ENCODE measurements at regions of chr15 and their contacts with region 1.

Region 1: DNA sequence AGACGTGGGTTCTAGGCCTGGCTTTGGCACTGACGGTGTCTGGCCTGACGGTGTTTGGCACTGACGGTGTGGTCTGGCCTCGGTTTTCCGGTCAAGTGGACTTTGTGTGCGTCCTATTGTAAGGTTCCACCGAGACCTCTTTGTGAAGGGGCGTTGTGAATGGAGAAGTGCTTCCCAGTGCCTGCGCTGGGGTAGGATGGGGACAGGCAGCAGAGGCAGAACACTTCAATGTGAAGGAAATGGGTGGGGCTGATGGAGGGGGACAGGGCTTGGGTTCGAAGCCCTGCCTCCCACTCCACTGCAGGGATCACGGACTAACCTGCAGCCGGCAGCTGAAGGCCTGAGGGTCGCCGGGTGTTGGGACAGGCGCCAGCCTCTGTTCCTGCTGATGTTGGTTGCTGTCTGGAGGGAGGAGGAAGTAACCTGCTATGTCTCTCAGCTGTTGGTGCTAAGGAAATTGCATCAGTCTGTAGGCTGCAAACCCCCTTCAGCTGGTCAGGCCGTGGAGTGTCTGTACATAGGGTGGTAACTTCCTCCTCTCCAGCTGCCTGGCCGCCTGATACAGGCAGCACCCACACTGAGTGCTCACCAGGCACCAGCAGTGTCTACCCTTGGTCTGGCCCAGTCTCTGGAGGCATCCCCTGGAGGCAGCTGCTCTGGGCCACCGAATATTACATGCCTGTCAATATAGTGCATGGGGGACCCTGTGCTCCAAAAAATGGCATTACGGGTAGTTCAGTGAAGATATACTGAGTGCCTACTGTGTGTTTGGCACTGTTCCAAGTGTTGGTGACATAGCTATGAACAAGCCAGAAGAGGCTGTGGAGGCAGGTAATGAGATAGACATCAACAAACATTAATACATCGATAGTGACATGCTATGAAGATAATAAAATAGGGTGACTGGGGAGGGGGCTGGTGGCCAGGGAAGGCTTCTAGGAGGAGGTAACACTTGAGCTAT is 1.1 kb downstream of the TM6SF1 start:
- DNase-seq: peak; percentile 46 to 57
- ATAC-seq: peak; percentile 26 to 30
- H3K4me3 ChIP-seq: peak overlapping the region; percentile 64 to 88 (median 76)
- H3K27ac ChIP-seq: peak overlapping the region; percentile 80 to 91 (median 88)
- H3K4me1 ChIP-seq: peaks cover 34 to 35% of the 10 kb centered on the region in 2 donors
- H3K27me3 ChIP-seq: no peaks in the 10 kb centered on the region
- CTCF ChIP-seq: no peak
- POLR2A ChIP-seq: peak in 1 of 2 donors; percentile 33

Region 2: GRCh38 chr15:82540055-82540983 is 568.2 kb before region 1 on chr15 and contains the start of gene RPS17:
- in situ Hi-C with region 1: loop called in 1 of 4 experiments (anchors 25 kb)
- intact Hi-C with region 1: no loop called
- DNase-seq: peak; percentile 89 to 94
- ATAC-seq: peak; percentile 91 to 95
- H3K4me3 ChIP-seq: peak within 1 kb of the TSS; percentile 82 to 88 (median 85)
- H3K27ac ChIP-seq: peak within 1 kb of the TSS; percentile 80 to 91 (median 83)
- H3K4me1 ChIP-seq: peaks cover 8 to 11% of the 10 kb centered on the region in 2 donors
- H3K27me3 ChIP-seq: no peaks in the 10 kb centered on the region
- CTCF ChIP-seq: peak; percentile 99 to 100 (median 99)
- POLR2A ChIP-seq: peak; percentile 85 to 91
- total RNA-seq, gene RPS17: 1,547 to 2,112 (median 1,667) TPM

Region 3: GRCh38 chr15:82768428-82769081 is 340.0 kb before region 1 on chr15:
- in situ Hi-C with region 1: no loop called
- intact Hi-C with region 1: loop called (anchors 10 kb)
- DNase-seq: peak; percentile 85 to 88
- ATAC-seq: peak; percentile 76 to 87
- H3K4me3 ChIP-seq: no peak overlapping the region
- H3K27ac ChIP-seq: peak overlapping the region; percentile 88 to 96 (median 92)
- H3K4me1 ChIP-seq: peaks cover 46 to 62% of the 10 kb centered on the region in 2 donors
- H3K27me3 ChIP-seq: no peaks in the 10 kb centered on the region
- CTCF ChIP-seq: no peak
- POLR2A ChIP-seq: peak; percentile 40 to 47

Region 4: GRCh38 chr15:82849556-82850512 is 258.7 kb before region 1 on chr15:
- in situ Hi-C with region 1: no loop called
- intact Hi-C with region 1: loop called (anchors 5 kb)
- DNase-seq: peak; percentile 84 to 91
- ATAC-seq: peak; percentile 95 to 96
- H3K4me3 ChIP-seq: peak overlapping the region in 1 of 4 donors; percentile 13
- H3K27ac ChIP-seq: peak overlapping the region; percentile 51 to 76 (median 62)
- H3K4me1 ChIP-seq: peaks cover 12% of the 10 kb centered on the region in 2 donors
- H3K27me3 ChIP-seq: no peaks in the 10 kb centered on the region
- CTCF ChIP-seq: peak; percentile 68 to 83 (median 79)
- POLR2A ChIP-seq: no peak

Region 5: DNA sequence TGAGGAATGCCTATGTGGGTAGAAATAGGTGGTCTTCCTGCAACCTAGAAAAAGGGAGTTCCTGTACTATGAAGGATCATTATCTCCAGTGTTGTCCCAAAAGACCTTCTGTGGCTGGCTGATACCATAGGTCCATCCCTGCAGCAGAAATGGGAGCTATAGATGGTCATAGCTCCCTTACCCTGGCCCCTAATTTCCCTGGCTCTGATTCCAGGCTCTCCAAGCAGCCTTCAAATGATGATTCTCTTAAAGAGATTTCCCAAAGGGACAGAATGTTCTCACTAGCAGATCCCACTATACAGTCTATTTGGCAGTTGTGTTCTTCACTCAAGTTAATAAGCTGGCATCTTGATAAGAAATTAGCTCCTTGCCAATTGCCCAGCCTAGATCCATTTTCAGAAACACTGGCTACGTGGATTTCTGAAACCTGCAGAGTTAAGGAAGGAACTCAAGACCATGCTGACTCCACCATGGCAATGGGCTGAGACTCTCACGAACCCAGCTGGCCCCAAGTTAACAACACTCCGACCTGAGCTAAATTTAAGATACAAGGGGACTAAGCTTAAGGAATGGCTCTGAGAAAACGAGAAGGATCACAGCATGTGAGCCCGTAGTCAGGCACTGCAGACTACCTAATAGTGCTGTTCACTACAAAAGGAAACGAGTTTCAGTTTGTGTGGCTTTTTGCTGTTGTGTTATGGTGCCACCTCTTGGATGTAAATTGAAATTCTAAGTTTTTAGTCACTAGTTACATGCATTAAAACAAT is 108.5 kb before region 1 on chr15:
- in situ Hi-C with region 1: loop called in 1 of 4 experiments (anchors 10 kb)
- intact Hi-C with region 1: no loop called
- DNase-seq: no peak
- ATAC-seq: peak; percentile 96
- H3K4me3 ChIP-seq: peak overlapping the region in 2 of 4 donors; percentile 11 to 19
- H3K27ac ChIP-seq: peak overlapping the region; percentile 38 to 68 (median 52)
- H3K4me1 ChIP-seq: peaks cover 0 to 7% of the 10 kb centered on the region in 2 donors
- H3K27me3 ChIP-seq: no peaks in the 10 kb centered on the region
- CTCF ChIP-seq: peak; percentile 37 to 68 (median 53)
- POLR2A ChIP-seq: no peak

Region 6: GRCh38 chr15:83046558-83047127 is 61.9 kb before region 1 on chr15:
- in situ Hi-C with region 1: no loop called
- intact Hi-C with region 1: loop called (anchors 5 kb)
- DNase-seq: no peak
- ATAC-seq: peak; percentile 75 to 92
- H3K4me3 ChIP-seq: no peak overlapping the region
- H3K27ac ChIP-seq: peak overlapping the region; percentile 61 to 77 (median 75)
- H3K4me1 ChIP-seq: peaks cover 29 to 41% of the 10 kb centered on the region in 2 donors
- H3K27me3 ChIP-seq: no peaks in the 10 kb centered on the region
- CTCF ChIP-seq: no peak
- POLR2A ChIP-seq: no peak

Region 7: DNA sequence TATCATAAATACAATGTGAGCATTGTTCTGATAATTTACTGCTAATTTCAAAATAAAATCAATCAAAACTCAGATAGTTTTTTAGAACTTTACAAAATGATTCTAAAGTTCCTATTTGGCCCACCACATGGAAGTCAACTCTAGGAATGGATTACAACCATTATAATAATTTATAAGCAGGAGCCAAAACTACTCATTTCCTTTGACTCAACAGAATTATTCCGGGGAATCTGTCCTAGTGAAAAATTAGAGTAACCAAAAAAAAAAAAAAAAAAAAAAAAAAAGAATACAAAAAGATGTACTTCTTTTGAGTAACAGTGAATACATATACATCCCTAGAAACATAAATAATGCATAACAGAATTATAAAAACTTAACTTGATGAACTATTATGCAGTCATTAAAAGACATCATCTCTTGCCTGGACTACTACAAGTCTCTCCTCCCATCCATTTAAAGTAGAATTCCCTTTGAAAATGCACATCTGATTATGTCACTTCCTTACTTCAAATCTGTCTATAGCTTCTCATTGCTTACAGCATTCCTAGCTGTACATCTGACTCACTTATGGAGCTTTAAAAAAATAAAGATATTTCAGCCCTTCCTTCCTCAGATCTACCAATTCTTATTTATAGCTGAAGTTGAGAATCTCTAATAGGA is 55.7 kb after region 1 on chr15:
- in situ Hi-C with region 1: no loop called
- intact Hi-C with region 1: no loop called
- DNase-seq: no peak
- ATAC-seq: no peak
- H3K4me3 ChIP-seq: no peak overlapping the region
- H3K27ac ChIP-seq: no peak overlapping the region
- H3K4me1 ChIP-seq: no peaks in the 10 kb centered on the region
- H3K27me3 ChIP-seq: no peaks in the 10 kb centered on the region
- CTCF ChIP-seq: no peak
- POLR2A ChIP-seq: no peak

Region 8: DNA sequence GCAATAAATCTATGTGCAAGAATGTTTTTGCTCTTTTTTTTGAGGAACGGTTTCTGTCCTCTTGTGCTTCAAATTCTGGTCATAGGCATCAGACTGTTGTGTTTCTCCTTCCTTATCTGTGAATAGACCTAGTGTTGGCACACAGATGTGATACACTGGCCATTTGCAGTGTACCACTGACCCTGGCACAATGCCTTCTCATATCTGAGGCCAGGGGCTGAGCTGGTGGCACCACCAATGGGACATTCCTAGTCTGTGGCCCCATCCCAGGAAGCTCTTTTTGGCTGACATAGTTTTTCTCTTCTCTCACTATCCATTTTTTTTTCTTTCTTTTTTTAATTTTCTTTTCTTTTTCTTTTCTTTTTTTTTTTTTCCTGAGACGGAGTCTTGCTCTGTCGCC is 379.0 kb after region 1 on chr15:
- in situ Hi-C with region 1: no loop called
- intact Hi-C with region 1: no loop called
- DNase-seq: no peak
- ATAC-seq: no peak
- H3K4me3 ChIP-seq: no peak overlapping the region
- H3K27ac ChIP-seq: no peak overlapping the region
- H3K4me1 ChIP-seq: no peaks in the 10 kb centered on the region
- H3K27me3 ChIP-seq: no peaks in the 10 kb centered on the region
- CTCF ChIP-seq: no peak
- POLR2A ChIP-seq: no peak